ENCODE measurements at regions of chr7 and their contacts with region 1.

Region 1: GRCh38 chr7:98755128-98755898 is 114.5 kb downstream of the TMEM130 start:
- DNase-seq: peak; percentile 47 to 77
- H3K4me3 ChIP-seq: peak overlapping the region in 1 of 2 donors; percentile 14
- H3K27ac ChIP-seq: peak overlapping the region; percentile 71 to 78
- H3K4me1 ChIP-seq: peaks cover 19 to 22% of the 10 kb centered on the region in 2 donors
- H3K27me3 ChIP-seq: no peaks in the 10 kb centered on the region
- CTCF ChIP-seq: peak; percentile 20 to 35 (median 27)

Region 2: GRCh38 chr7:98434095-98434494 is 321.2 kb before region 1 on chr7:
- intact Hi-C with region 1: loop called (anchors 5 kb)
- DNase-seq: no peak
- H3K4me3 ChIP-seq: no peak overlapping the region
- H3K27ac ChIP-seq: no peak overlapping the region
- H3K4me1 ChIP-seq: no peaks in the 10 kb centered on the region
- H3K27me3 ChIP-seq: no peaks in the 10 kb centered on the region
- CTCF ChIP-seq: no peak

Region 3: GRCh38 chr7:98617051-98617959 is 138.0 kb before region 1 on chr7 and contains the start of gene NPTX2:
- intact Hi-C with region 1: loop called (anchors 2 kb)
- DNase-seq: peak in 1 of 2 donors; percentile 85
- H3K4me3 ChIP-seq: peak within 1 kb of the TSS; percentile 60 to 76
- H3K27ac ChIP-seq: peak within 1 kb of the TSS; percentile 46 to 57
- H3K4me1 ChIP-seq: peaks cover 4 to 11% of the 10 kb centered on the region in 2 donors
- H3K27me3 ChIP-seq: no peaks in the 10 kb centered on the region
- CTCF ChIP-seq: peak; percentile 18 to 50 (median 30)
- total RNA-seq, gene NPTX2: 44.2 TPM

Region 4: DNA sequence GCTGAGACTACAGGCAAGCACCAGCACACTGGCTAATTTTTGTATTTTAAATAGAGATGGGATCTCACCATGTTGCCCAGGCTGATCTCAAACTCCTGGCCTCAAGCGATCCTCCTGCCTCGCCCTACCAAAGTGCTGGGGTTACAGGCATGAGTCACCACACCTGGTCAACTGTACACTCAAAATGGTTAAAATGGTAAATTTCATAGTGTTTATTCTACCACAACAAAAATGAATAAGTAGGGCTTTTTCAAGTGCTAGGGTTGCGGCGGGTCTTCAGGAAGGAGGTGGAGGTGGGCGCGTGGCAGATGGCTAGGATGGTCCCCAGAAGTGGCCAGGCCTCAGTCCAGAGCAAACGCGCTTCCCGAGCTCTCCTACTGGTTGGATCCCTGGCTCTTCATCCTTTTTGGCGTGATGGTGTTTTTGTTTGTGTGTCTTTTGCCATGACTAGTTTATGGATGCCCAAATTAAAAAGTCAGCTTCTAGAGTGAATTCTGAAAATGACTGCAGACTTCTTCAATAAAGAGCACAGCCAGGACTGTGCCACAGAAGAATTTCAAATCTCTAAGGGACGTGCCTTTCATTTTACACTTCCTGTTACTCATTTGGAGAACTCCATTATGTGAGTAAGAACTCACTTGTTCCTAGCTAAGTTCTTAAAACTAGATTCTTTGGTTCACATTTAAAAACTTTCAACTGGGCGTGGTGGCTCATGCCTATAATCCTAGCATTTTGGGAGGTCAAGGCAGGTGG is 40.6 kb after region 1 on chr7:
- intact Hi-C with region 1: loop called (anchors 2 kb)
- DNase-seq: no peak
- H3K4me3 ChIP-seq: no peak overlapping the region
- H3K27ac ChIP-seq: peak overlapping the region; percentile 74 to 84
- H3K4me1 ChIP-seq: peaks cover 11 to 12% of the 10 kb centered on the region in 2 donors
- H3K27me3 ChIP-seq: no peaks in the 10 kb centered on the region
- CTCF ChIP-seq: no peak

Region 5: GRCh38 chr7:98802088-98802780 is 46.9 kb after region 1 on chr7:
- intact Hi-C with region 1: loop called (anchors 1 kb)
- DNase-seq: peak; percentile 79 to 95
- H3K4me3 ChIP-seq: no peak overlapping the region
- H3K27ac ChIP-seq: peak overlapping the region; percentile 49 to 59
- H3K4me1 ChIP-seq: peaks cover 7% of the 10 kb centered on the region in 2 donors
- H3K27me3 ChIP-seq: no peaks in the 10 kb centered on the region
- CTCF ChIP-seq: no peak

Region 6: GRCh38 chr7:98816241-98816640 is 60.9 kb after region 1 on chr7:
- intact Hi-C with region 1: loop called (anchors 2 kb)
- DNase-seq: peak; percentile 75 to 89
- H3K4me3 ChIP-seq: no peak overlapping the region
- H3K27ac ChIP-seq: peak overlapping the region; percentile 84 to 96
- H3K4me1 ChIP-seq: peaks cover 0 to 36% of the 10 kb centered on the region in 2 donors
- H3K27me3 ChIP-seq: no peaks in the 10 kb centered on the region
- CTCF ChIP-seq: no peak

Region 7: GRCh38 chr7:98826387-98827231 is 71.3 kb after region 1 on chr7:
- intact Hi-C with region 1: loop called (anchors 2 kb)
- DNase-seq: peak; percentile 65 to 96
- H3K4me3 ChIP-seq: peak overlapping the region in 1 of 2 donors; percentile 10
- H3K27ac ChIP-seq: peak overlapping the region; percentile 81
- H3K4me1 ChIP-seq: peaks cover 4 to 14% of the 10 kb centered on the region in 2 donors
- H3K27me3 ChIP-seq: no peaks in the 10 kb centered on the region
- CTCF ChIP-seq: peak; percentile 37 to 56 (median 42)

Region 8: DNA sequence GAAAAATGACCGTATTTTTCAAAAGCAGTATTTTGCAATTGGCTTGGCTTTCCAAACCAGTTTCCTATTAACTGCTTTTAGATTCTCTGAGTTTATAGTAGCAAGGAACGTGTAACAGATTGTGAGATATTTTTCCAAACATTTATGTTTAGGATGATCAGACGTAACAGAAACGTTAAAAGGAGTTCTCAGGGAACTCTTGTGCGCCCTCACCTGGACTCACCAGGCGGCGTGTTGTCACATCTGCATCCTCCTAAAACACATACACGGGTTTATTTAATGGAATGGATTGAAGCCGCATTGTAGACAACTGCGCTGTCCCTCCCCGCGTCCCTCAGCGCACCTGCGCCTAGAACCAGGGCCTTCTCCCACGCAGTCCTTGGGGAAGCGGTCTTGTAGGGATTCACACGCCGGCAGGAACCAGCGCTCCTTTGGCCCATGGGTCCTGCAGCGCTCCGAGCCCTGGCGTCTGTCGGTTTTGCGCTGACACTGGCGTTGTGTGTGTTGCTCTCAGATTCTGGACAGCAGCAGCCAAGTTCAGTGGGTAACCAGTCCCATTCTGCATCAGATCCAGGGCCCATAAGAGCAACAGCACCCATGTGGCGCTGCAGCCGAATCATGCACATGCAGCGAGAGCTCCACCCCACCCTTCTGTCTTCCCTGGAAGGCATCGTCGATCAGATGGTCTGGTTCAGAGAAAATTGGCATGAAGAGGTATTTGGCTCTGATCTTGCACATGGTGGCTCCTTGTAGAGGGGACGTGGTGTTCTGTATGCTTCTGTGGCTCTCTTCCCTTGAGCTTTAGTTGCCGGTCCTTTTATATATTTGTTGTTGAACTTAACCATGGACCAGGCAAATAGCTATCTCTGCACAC is 237.9 kb after region 1 on chr7:
- intact Hi-C with region 1: no loop called
- DNase-seq: peak in 1 of 2 donors; percentile 41
- H3K4me3 ChIP-seq: no peak overlapping the region
- H3K27ac ChIP-seq: no peak overlapping the region
- H3K4me1 ChIP-seq: no peaks in the 10 kb centered on the region
- H3K27me3 ChIP-seq: no peaks in the 10 kb centered on the region
- CTCF ChIP-seq: no peak

Region 9: DNA sequence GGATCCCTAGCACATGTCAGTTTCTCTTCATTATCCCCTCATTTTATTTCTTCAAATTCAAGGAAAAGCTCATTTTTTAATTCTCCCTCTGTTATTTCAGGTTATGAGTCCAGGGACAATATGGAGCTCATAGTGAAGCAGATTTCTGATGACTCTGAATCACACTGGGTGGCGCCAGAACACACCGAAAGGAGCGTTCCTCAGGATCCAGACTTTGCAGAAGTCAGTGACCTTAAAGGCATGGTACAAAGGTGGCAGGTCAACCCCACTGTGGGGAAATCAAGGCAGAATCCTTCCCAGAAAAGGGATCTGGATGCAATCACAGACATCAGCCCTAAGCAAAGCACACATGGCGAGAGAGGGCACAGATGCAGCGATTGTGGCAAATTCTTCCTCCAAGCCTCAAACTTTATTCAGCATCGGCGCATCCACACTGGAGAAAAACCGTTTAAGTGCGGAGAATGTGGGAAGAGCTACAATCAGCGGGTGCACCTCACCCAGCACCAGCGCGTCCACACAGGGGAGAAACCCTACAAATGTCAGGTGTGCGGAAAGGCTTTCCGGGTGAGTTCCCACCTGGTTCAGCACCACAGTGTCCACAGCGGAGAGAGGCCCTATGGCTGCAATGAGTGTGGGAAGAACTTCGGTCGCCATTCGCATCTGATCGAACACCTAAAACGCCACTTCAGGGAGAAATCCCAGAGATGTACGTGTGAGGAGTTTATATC is 770.6 kb after region 1 on chr7:
- intact Hi-C with region 1: no loop called
- DNase-seq: no peak
- H3K4me3 ChIP-seq: no peak overlapping the region
- H3K27ac ChIP-seq: no peak overlapping the region
- H3K4me1 ChIP-seq: no peaks in the 10 kb centered on the region
- H3K27me3 ChIP-seq: no peaks in the 10 kb centered on the region
- CTCF ChIP-seq: no peak

Measured in ascending aorta (tissue), 2 donors.